HEK293 (cell line): ENCODE measurements at regions of chr2 and their contacts with region 1.

Region 1: DNA sequence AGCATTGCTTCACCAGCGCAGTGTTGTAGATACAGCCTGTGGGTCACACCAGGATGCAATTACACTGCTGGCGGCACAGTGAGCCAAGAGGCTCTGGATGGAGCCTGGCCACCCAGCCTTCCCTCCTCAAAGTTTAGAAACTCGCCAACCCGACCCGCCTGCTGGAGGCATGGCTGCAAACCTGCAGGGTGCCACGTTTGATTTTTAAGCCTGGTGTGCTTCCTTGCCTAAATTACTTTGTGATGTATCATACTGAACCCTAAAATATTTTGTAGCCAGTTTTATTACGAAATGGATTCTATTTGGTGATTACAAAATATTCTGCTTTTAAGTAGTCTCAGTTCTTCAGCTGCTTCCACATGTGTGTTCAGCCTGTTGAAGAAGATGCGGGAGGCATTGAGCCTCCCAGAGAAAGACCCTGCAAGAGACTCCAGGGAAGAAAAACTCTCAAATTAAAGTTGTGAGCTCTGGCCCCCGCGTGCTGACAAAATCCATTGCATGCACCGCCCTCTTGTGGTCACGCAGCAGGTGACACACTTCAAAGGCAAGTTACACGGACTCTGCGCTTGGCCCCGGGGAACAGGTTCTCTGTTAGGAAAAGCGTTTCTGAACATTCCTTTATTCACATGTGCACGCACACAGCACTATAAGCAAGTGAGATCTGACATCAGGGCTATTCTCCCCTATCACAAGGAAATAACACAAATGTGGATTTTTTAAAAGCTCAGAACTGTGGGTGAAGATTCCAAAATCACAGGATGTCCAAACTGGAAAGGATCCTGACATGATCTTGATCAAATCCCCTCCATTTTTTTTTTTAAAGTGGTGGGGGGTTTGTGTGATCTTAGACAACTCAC is 63.0 kb upstream of the TWIST2 start:
- H3K4me3 ChIP-seq: no peak overlapping the region
- H3K27ac ChIP-seq: no peak overlapping the region
- H3K4me1 ChIP-seq: no peaks in the 10 kb centered on the region
- CTCF ChIP-seq: peak; percentile 54; the same call in 1 of the 2 replicates

Region 2: GRCh38 chr2:238513346-238513745 is 271.6 kb before region 1 on chr2:
- CTCF ChIA-PET with region 1: interaction called, 11 read pairs
- POLR2A ChIA-PET with region 1: no interaction called
- H3K4me3 ChIP-seq: no peak overlapping the region
- H3K27ac ChIP-seq: no peak overlapping the region
- H3K4me1 ChIP-seq: no peaks in the 10 kb centered on the region
- CTCF ChIP-seq: no peak

Region 3: GRCh38 chr2:238720232-238720672 is 64.6 kb before region 1 on chr2:
- CTCF ChIA-PET with region 1: interaction called, 24 read pairs
- POLR2A ChIA-PET with region 1: no interaction called
- H3K4me3 ChIP-seq: no peak overlapping the region
- H3K27ac ChIP-seq: no peak overlapping the region
- H3K4me1 ChIP-seq: no peaks in the 10 kb centered on the region
- CTCF ChIP-seq: peak; percentile 63; the same call in 1 of the 2 replicates

Region 4: DNA sequence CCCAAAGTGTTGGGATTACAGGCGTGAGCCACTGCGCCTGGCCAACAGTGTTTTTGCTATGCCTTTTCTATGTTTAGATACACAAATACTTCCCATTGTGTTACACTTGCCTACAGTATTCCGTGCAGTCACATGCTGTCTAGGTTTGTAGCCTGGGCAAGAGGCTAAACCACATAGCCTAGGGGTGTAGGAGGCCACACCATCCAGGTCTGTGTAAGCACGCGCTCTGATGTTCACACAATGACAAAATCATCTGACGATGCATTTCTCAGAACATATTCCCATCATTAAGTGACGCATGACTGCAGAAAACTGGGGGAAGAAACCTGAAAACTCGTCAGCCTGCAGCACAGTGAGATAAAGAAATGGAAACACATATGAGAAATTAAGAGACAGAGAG is 16.9 kb after region 1 on chr2:
- CTCF ChIA-PET with region 1: interaction called, 22 read pairs
- POLR2A ChIA-PET with region 1: no interaction called
- H3K4me3 ChIP-seq: no peak overlapping the region
- H3K27ac ChIP-seq: no peak overlapping the region
- H3K4me1 ChIP-seq: no peaks in the 10 kb centered on the region
- CTCF ChIP-seq: no peak

Region 5: GRCh38 chr2:238835726-238836301 is 50.9 kb after region 1 on chr2:
- CTCF ChIA-PET with region 1: no interaction called
- POLR2A ChIA-PET with region 1: no interaction called
- H3K4me3 ChIP-seq: no peak overlapping the region
- H3K27ac ChIP-seq: no peak overlapping the region
- H3K4me1 ChIP-seq: no peaks in the 10 kb centered on the region
- CTCF ChIP-seq: no peak

Region 6: DNA sequence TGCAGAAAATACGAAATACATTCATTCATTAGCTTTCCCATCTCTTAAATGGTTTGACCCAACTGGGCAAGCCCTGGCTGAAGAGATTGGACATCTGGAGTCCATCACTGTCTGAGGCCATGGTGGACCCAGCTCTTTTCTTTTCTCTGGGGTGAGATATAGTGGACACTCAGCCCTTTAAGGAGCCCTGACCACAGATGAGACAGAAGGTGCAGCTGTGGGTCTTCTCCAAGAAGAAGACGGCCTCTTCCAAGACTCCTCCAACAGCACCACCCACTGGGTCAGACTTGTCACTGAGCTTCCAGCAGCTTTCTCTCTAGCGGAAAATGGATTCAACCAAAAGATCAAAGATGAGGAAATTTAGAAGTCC is 90.2 kb after region 1 on chr2:
- CTCF ChIA-PET with region 1: interaction called, 11 read pairs
- POLR2A ChIA-PET with region 1: no interaction called
- H3K4me3 ChIP-seq: no peak overlapping the region
- H3K27ac ChIP-seq: no peak overlapping the region
- H3K4me1 ChIP-seq: no peaks in the 10 kb centered on the region
- CTCF ChIP-seq: no peak